Activated CD8-positive, alpha-beta T cell treated with anti-CD3 and anti-CD28 coated beads, Interleukin-2, amount 10 ng/mL, durations not matched to agents 7 days and 5 days (primary cell): ENCODE measurements at regions of chr22 and their contacts with region 1.

Region 1: DNA sequence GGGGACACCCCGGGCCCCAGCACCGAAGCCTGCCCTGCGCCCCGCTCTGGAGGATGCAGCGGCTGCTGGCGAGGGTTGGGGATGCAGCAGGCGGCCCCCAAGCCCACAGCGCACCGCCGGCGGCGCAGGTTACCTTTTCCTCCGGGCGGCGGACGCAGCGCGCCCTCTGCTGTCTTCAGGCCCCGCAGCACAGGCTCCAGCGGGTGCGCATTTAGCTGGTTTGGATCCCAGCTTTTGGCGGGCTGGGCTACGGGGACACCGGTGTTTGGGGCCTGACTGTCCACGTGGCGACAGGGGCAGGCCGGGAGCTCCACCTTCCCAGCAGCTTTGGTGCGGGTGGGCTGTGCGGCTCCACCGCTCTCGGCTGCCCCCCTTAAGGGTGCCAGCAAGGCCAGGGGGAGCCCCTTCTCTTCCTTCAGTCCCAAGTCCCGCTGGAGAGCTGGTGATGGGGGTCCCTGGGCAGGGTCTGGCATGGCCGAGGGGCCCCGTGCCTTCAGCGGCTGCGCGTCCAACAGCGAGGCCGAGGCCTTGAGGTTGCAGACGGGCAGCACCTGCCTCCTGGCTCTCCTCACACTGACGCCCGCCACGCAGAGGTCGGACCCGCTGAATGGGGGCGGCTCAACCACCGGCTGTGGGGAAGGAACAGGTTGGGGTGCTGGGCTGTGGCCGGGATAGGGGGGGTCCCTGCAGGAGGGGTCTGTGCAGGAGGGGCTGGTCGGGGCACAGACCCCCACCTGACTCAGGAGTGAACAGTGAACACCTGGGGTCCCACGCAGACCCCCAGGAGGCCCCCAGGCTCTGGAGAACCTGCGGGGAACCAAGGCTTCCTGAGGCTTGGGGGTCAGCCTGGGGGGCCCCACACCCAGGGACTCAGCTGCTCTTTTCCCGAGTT is 18.0 kb upstream of the IL17REL start:
- DNase-seq: peak; percentile 86
- ATAC-seq: peak; percentile 97
- H3K4me3 Mint-ChIP-seq: no peak overlapping the region
- H3K27ac Mint-ChIP-seq: no peak overlapping the region
- H3K4me1 Mint-ChIP-seq: peaks cover 4% of the 10 kb centered on the region
- H3K27me3 Mint-ChIP-seq: no peaks in the 10 kb centered on the region

Region 2: DNA sequence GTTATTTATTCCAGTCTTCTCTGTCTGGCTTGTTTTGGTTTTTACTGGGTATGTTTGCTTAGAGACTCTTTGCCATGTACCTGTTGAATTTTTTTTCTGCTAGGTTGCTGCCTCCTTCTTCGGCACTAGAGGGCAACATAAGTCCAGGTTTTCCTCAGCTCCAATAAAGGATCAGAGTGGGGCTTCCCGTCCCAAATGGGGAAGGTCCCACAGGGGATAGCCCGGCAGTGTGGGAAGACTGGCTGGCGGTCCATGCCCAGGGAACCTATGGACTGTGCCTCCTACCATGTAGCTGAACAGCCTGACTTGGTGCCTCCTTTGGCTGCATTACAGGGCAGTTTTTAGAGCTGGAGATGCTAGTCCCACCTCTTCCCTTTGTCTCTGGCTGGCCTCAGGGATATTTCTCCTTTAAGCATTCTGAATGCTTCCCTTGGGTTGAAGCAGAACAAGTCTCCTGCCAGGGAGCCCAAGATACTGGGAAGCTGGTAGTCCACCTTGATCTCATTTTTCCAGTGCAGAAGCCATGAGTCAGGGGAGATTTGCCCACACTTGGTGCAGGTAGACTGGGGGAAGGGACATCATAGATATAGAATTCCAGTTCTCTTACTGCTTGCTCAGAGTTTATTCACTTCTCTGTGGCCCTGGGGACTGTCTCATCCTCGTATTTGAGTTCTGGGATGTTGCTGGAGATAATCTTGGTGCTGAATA is 263.0 kb before region 1 on chr22:
- CTCF ChIA-PET with region 1: interaction called, 35 read pairs
- POLR2A ChIA-PET with region 1: no interaction called
- DNase-seq: peak; percentile 47
- ATAC-seq: peak; percentile 29
- H3K4me3 Mint-ChIP-seq: no peak overlapping the region
- H3K27ac Mint-ChIP-seq: peak overlapping the region; percentile 45
- H3K4me1 Mint-ChIP-seq: peaks cover 20% of the 10 kb centered on the region
- H3K27me3 Mint-ChIP-seq: no peaks in the 10 kb centered on the region

Region 3: DNA sequence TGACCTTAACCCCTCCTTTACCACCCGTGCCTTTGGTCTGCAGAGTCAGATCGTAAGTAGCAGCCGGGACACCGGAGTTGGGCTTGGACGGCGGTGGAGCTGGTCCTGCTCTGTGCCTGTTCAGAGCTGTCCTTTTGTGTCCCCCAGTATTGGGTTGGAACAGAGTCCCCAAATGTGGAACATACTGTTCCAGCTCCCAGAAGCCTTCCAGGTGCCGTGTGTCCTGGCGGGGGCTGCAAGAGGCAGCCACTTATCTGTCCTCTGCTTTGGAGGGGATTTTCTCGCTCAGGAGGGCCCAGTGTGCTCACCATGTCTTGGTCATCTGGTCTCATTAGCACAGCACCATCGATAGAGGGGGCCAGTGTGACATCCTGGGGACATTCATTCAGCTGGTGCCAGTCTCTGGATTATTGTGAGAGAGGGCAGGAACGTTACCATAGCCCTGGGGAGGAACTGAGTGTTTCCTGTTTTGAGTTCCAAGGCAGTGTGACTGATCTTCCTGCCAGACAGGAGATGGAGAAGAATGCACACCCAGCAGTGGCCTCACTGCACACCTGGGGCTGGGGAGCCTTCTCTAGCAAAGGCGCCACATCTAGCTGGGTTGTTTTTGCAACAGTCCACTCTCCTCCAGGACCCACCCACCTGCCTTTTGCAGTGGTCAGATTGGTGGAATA is 99.7 kb before region 1 on chr22:
- CTCF ChIA-PET with region 1: interaction called, 90 read pairs
- POLR2A ChIA-PET with region 1: interaction called, 3 read pairs
- DNase-seq: peak; percentile 63
- ATAC-seq: no peak
- H3K4me3 Mint-ChIP-seq: no peak overlapping the region
- H3K27ac Mint-ChIP-seq: peak overlapping the region; percentile 60
- H3K4me1 Mint-ChIP-seq: peaks cover 34% of the 10 kb centered on the region
- H3K27me3 Mint-ChIP-seq: no peaks in the 10 kb centered on the region

Region 4: GRCh38 chr22:49979587-49980264 is 50.8 kb before region 1 on chr22:
- CTCF ChIA-PET with region 1: interaction called, 10 read pairs
- POLR2A ChIA-PET with region 1: no interaction called
- DNase-seq: peak; percentile 46
- ATAC-seq: no peak
- H3K4me3 Mint-ChIP-seq: no peak overlapping the region
- H3K27ac Mint-ChIP-seq: no peak overlapping the region
- H3K4me1 Mint-ChIP-seq: peaks cover 14% of the 10 kb centered on the region
- H3K27me3 Mint-ChIP-seq: peaks cover 9% of the 10 kb centered on the region

Region 5: DNA sequence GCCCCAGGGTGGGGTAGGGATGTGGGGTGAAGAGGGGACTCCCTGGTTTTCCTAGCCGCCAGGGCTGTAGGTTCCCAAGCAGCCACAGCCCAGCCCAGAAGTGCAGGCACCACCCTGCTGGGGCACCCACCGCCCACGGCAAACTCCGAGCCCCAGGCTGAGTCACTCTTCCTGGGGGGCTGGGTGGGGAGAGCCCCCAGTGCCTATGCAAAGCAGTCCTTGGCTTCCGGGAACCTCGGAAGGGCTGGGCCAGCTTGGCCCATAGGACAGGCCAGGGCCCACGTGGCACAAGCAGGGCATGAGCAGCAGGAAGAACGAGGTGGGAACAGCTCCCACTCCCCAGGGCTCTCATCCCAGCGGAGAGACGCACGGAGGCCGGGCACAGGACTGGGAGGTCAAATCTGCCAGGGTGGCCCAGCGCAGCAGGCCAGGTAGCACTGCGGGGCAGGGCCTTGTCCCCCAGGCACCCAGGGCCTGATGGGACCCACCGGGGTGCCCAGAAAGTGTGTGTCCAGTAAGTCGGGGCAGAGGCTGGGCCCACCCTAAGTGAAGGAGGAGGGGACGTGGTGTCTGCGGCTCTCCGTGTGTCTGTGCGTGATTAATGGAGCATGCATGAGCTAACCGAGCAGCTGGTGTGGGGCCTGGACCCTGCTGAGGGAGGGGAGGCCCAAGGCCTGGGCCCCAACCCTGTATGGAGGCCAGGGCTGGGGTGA is 13.4 kb before region 1 on chr22:
- CTCF ChIA-PET with region 1: interaction called, 23 read pairs
- POLR2A ChIA-PET with region 1: no interaction called
- DNase-seq: peak; percentile 31
- ATAC-seq: peak; percentile 17
- H3K4me3 Mint-ChIP-seq: no peak overlapping the region
- H3K27ac Mint-ChIP-seq: no peak overlapping the region
- H3K4me1 Mint-ChIP-seq: peaks cover 28% of the 10 kb centered on the region
- H3K27me3 Mint-ChIP-seq: no peaks in the 10 kb centered on the region

Region 6: GRCh38 chr22:50076646-50077535 is 46.3 kb after region 1 on chr22:
- CTCF ChIA-PET with region 1: no interaction called
- POLR2A ChIA-PET with region 1: no interaction called
- DNase-seq: no peak
- ATAC-seq: no peak
- H3K4me3 Mint-ChIP-seq: no peak overlapping the region
- H3K27ac Mint-ChIP-seq: no peak overlapping the region
- H3K4me1 Mint-ChIP-seq: no peaks in the 10 kb centered on the region
- H3K27me3 Mint-ChIP-seq: no peaks in the 10 kb centered on the region

Region 7: DNA sequence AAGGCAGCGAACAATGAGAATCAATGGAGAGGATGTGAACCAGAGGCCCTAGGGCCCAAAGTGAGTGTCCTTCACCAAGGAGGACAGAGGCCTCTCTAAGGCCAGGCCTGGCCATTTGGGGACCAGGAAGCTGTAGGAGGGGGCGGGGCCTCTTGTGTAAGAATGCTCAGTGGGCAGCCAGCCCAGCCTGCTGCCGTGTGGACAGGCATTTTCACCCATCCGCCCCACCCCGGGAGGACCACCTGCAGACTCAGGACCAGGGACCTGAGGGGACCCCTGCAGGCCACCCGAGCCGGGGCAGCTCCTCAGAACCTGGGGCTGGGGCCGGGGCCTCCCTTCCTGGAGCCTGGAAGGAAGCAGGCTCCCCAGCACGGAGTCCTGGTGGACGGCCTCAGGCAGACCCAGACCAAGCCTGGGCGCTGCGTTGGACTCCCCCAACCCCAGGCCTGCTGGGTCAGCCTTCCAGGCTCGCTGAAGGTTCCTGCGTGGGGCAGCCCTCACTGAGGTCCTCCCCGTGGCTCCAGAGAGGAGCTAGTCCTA is 153.5 kb after region 1 on chr22:
- CTCF ChIA-PET with region 1: no interaction called
- POLR2A ChIA-PET with region 1: no interaction called
- DNase-seq: no peak
- ATAC-seq: no peak
- H3K4me3 Mint-ChIP-seq: peak overlapping the region; percentile 66
- H3K27ac Mint-ChIP-seq: peak overlapping the region; percentile 52
- H3K4me1 Mint-ChIP-seq: peaks cover 35% of the 10 kb centered on the region
- H3K27me3 Mint-ChIP-seq: no peaks in the 10 kb centered on the region